ENCODE measurements at regions of chr19 and their contacts with region 1.

Region 1: GRCh38 chr19:925526-926322 is at the start of gene ARID3A:
- DNase-seq: peak in 1 of 2 experiments; percentile 75
- H3K4me3 ChIP-seq: peak within 1 kb of the TSS; percentile 65 to 97 (median 76)
- H3K27ac ChIP-seq: peak within 1 kb of the TSS; percentile 39; the same call in 1 of the 2 replicates
- H3K4me1 ChIP-seq: peaks cover 2 to 8% (median 6%) of the 10 kb centered on the region in 4 experiments
- H3K27me3 ChIP-seq: peaks cover 6 to 8% (median 8%) of the 10 kb centered on the region in 4 experiments
- CTCF ChIP-seq: no peak
- EP300 ChIP-seq: no peak
- POLR2A ChIP-seq: no peak
- RAD21 ChIP-seq: no peak
- total RNA-seq, gene ARID3A: 77.4 and 78.4 TPM in 2 replicates

Region 2: GRCh38 chr19:757811-758668 is 167.7 kb before region 1 on chr19:
- CTCF ChIA-PET with region 1: no interaction called
- POLR2A ChIA-PET with region 1: no interaction called
- DNase-seq: no peak
- H3K4me3 ChIP-seq: no peak overlapping the region
- H3K27ac ChIP-seq: no peak overlapping the region
- H3K4me1 ChIP-seq: no peaks in the 10 kb centered on the region
- H3K27me3 ChIP-seq: no peaks in the 10 kb centered on the region
- CTCF ChIP-seq: no peak
- EP300 ChIP-seq: no peak
- POLR2A ChIP-seq: no peak
- RAD21 ChIP-seq: no peak

Region 3: GRCh38 chr19:1000095-1000494 is 74.4 kb after region 1 on chr19 and contains the start of gene GRIN3B:
- CTCF ChIA-PET with region 1: interaction called, 13 read pairs
- POLR2A ChIA-PET with region 1: interaction called, 4 read pairs
- DNase-seq: peak in 1 of 2 experiments; percentile 89
- H3K4me3 ChIP-seq: peak within 1 kb of the TSS; percentile 9 to 67 (median 30); a peak in 5 of 8 replicates
- H3K27ac ChIP-seq: no peak within 1 kb of the TSS
- H3K4me1 ChIP-seq: peaks cover 0 to 10% (median 6%) of the 10 kb centered on the region in 4 experiments; a peak in 3 of 7 replicates
- H3K27me3 ChIP-seq: peaks cover 6 to 33% (median 19%) of the 10 kb centered on the region in 4 experiments
- CTCF ChIP-seq: peak; percentile 78 to 87 (median 86)
- EP300 ChIP-seq: no peak
- POLR2A ChIP-seq: no peak
- RAD21 ChIP-seq: peak; percentile 32 to 46
- total RNA-seq, gene GRIN3B: 0.45 and 0.63 TPM in 2 replicates